Calu3 (cell line): ENCODE measurements at regions of chr3 and their contacts with region 1.

Region 1: GRCh38 chr3:137105277-137105977 is 147.6 kb downstream of the IL20RB start:
- DNase-seq: peak; percentile 63
- H3K4me3 Mint-ChIP-seq: no peak overlapping the region
- H3K27ac Mint-ChIP-seq: no peak overlapping the region
- H3K4me1 Mint-ChIP-seq: no peaks in the 10 kb centered on the region
- H3K27me3 Mint-ChIP-seq: peaks cover 29% of the 10 kb centered on the region
- CTCF ChIP-seq: peak; percentile 71

Region 2: DNA sequence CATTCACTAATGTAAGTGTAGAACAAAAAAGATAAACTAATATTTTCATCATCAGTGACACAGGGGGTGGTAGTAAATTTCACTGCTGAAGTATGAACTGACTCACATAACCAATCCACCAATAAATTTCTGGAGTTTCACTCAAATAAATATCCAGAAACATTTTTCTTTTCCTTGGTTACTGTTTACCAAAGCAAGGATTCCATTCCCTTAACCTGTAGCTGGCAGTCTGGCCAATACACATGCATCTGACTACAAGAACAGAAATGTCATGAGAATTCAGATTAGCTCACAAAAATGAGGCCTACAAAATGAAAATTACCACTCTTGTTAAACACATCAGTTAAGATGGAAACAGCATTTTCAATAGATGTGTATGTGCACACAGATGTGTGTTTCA is 433.5 kb before region 1 on chr3:
- CTCF ChIA-PET with region 1: no interaction called
- intact Hi-C with region 1: no loop called
- DNase-seq: no peak
- H3K4me3 Mint-ChIP-seq: no peak overlapping the region
- H3K27ac Mint-ChIP-seq: no peak overlapping the region
- H3K4me1 Mint-ChIP-seq: peaks cover 7% of the 10 kb centered on the region
- H3K27me3 Mint-ChIP-seq: no peaks in the 10 kb centered on the region
- CTCF ChIP-seq: no peak

Region 3: DNA sequence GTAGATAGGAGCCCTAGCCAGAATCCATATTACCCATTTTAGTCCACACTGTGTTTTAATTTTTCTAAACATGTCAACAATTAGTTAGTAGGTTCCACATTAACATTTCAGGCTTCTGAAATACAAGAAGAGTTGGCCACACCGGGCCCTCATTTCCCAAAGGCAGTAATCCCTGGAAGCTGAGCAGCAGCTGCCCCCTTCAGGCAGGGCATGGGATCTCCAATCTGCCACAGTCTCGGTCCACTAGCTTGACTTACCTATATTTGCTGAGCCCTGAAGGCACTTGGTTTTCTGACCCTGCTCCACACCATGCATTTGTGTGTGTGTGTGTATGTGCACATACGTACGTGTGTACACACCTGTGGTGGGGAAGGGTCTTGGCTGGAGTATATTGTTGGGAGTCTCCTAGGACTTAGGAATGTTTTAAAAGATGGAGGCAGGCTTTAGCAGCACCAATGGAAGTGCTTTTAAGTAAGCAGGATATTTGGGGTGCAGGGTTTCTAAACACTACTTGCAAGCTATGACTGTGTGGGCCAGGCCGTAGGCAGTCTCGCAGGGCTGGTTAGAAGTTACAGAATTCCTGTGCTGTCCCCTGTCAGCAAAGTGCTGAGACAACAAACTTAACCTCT is 587.5 kb after region 1 on chr3:
- CTCF ChIA-PET with region 1: interaction called, 7 read pairs
- intact Hi-C with region 1: loop called (anchors 1 kb)
- DNase-seq: peak; percentile 68
- H3K4me3 Mint-ChIP-seq: no peak overlapping the region
- H3K27ac Mint-ChIP-seq: no peak overlapping the region
- H3K4me1 Mint-ChIP-seq: no peaks in the 10 kb centered on the region
- H3K27me3 Mint-ChIP-seq: peaks cover 18% of the 10 kb centered on the region
- CTCF ChIP-seq: peak; percentile 47

Region 4: DNA sequence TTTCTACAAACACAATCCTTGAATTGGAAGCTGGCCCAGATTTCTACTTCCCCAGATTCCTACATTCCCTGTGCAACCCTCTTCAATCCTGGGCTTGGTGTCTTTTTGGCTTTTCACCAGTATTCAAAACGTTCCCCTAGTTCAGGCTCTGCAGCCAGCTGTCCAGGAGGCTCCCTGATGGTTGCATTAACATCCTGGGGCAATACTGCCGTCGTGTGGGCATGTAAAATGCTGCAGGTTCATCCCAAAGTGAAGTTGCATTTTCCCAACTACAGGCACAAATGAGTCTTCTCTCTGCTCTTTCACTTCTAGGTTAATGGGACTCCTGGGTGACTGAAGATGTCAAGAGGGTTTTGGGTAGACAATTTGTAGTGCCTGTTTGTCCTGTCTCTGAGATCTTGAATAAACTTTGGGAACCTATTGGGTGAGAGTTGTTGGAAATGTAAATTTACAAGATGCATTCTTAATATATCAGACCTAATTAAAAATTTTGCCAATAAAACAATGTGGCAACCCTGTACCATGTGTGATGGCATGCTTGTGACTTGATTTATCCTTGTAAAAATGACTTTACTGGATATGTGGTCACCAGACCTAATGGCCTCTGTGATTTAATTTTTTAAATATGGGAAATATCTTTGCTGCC is 687.3 kb after region 1 on chr3:
- CTCF ChIA-PET with region 1: no interaction called
- intact Hi-C with region 1: loop called (anchors 1 kb)
- DNase-seq: peak; percentile 51
- H3K4me3 Mint-ChIP-seq: no peak overlapping the region
- H3K27ac Mint-ChIP-seq: no peak overlapping the region
- H3K4me1 Mint-ChIP-seq: no peaks in the 10 kb centered on the region
- H3K27me3 Mint-ChIP-seq: peaks cover 2% of the 10 kb centered on the region
- CTCF ChIP-seq: peak; percentile 37

Region 5: GRCh38 chr3:137866015-137866414 is 760.6 kb after region 1 on chr3:
- CTCF ChIA-PET with region 1: no interaction called
- intact Hi-C with region 1: no loop called
- DNase-seq: no peak
- H3K4me3 Mint-ChIP-seq: no peak overlapping the region
- H3K27ac Mint-ChIP-seq: no peak overlapping the region
- H3K4me1 Mint-ChIP-seq: no peaks in the 10 kb centered on the region
- H3K27me3 Mint-ChIP-seq: peaks cover 17% of the 10 kb centered on the region
- CTCF ChIP-seq: no peak

Region 6: GRCh38 chr3:137970914-137971831 is 865.7 kb after region 1 on chr3:
- CTCF ChIA-PET with region 1: interaction called, 11 read pairs
- intact Hi-C with region 1: loop called (anchors 1 kb)
- DNase-seq: peak; percentile 96
- H3K4me3 Mint-ChIP-seq: peak overlapping the region; percentile 33
- H3K27ac Mint-ChIP-seq: peak overlapping the region; percentile 14
- H3K4me1 Mint-ChIP-seq: peaks cover 6% of the 10 kb centered on the region
- H3K27me3 Mint-ChIP-seq: no peaks in the 10 kb centered on the region
- CTCF ChIP-seq: peak; percentile 97